MCF 10A (cell line): ENCODE measurements at regions of chr10 and their contacts with region 1.

Region 1: DNA sequence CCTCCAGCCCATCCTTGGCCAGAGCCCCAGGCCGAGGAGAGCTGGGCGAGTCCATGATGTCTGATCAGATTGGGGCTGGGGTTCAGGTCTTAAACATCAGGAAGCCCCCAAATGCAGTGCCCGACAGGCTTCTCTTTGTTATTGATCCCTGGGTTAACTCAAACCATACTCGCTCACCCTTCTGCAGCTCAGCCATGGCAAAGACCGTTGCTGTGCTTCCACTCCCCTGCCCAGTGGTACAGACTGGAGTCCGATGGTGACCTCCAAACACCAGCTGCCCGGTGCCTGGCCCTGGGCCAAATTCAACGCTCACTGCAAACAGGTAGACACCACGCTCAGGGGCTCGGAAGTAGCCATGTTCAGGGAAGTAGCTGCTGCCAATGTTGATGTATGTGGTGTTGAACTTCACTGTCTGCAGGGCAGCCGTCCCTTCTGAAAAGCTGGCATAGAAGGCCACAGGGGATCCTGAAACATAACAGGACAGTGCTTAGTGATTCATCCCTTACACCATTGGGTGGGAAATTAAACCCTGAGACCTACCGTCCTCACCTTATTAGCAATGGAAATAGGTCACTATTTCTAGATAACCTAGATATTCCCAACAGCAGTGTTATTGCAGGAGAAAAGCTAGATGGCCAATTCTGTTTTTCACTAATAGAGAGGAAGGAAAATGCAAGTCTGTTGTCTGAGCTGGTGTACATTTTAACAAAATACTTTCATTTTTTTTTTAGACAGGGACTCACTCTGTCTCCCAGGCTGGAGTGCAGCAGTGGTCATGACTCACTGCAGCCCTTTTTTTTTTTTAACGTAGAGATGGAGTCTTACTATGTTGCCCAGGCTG is 20.5 kb downstream of the MMRN2 start:
- DNase-seq: peak; percentile 25
- H3K4me3 Mint-ChIP-seq: no peak overlapping the region
- H3K27ac Mint-ChIP-seq: no peak overlapping the region
- H3K4me1 Mint-ChIP-seq: peaks cover 2% of the 10 kb centered on the region
- H3K27me3 Mint-ChIP-seq: no peaks in the 10 kb centered on the region
- CTCF ChIP-seq: no peak

Region 2: DNA sequence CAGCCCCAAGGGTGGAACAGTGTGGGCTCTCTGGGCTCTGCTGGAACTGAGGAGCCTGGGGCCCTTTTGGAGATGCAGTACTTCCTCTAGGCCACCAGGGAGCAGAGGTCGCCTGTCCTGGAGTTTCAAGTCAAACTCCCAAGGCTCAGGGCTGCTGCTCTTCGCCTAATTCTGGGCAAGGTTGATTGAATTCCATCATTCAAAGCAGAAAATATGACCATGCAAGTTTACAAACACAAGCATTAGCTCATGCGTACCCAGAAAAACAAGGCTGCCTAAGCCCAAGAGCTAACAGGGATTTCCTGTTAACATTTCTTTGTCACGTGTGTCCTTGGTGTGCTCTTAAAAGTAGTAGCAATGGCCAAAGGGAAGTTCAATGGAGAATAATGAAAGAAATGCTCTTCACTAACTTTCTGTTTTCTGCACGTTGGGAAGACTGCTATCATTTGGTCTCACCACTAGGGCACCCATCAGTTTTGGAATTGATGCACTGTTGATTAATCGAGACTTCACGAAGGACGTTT is 248.4 kb before region 1 on chr10:
- CTCF ChIA-PET with region 1: interaction called, 12 read pairs
- POLR2A ChIA-PET with region 1: no interaction called
- intact Hi-C with region 1: no loop called
- DNase-seq: peak; percentile 67
- H3K4me3 Mint-ChIP-seq: no peak overlapping the region
- H3K27ac Mint-ChIP-seq: no peak overlapping the region
- H3K4me1 Mint-ChIP-seq: no peaks in the 10 kb centered on the region
- H3K27me3 Mint-ChIP-seq: peaks cover 15% of the 10 kb centered on the region
- CTCF ChIP-seq: peak; percentile 76

Region 3: DNA sequence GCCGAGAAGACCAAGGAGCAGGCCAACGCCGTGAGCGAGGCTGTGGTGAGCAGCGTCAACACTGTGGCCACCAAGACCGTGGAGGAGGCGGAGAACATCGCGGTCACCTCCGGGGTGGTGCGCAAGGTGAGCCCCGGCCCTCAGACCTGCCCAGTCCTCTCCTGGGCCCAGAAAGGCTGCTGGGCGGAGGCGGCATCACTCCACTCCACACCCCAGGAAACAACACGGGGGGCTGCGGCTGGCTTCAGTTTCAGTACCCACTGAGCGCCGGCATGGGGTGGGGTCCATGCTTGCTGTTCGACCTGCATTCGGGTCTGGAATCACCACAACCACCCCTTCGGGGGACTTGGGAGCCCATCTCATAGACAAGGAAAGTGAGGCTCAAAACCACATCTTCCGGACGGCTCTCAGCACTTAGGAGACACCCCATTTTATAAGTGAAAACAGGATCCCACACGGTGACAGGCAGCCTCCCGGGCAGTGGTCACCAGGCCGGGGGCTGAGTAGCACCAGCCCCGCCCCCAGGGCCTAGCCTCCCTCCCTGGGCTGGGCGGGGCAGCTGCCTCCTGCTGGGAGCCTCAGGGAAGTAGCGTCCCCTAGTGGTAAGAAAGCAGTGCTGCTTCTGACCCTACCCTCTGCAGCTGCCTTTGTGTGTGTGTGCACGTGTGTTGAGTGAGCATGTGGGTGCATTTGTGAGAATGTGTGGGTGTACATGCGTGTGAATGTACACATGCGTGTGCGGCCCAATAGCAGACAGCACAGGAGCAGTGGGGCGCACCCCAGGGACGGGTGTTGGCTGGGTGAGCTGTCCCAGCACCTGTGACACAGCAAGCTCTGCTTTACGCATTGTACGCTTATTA is 23.4 kb after region 1 on chr10:
- CTCF ChIA-PET with region 1: interaction called, 66 read pairs
- POLR2A ChIA-PET with region 1: interaction called, 3 read pairs
- intact Hi-C with region 1: no loop called
- DNase-seq: peak; percentile 80
- H3K4me3 Mint-ChIP-seq: no peak overlapping the region
- H3K27ac Mint-ChIP-seq: no peak overlapping the region
- H3K4me1 Mint-ChIP-seq: peaks cover 12% of the 10 kb centered on the region
- H3K27me3 Mint-ChIP-seq: no peaks in the 10 kb centered on the region
- CTCF ChIP-seq: peak; percentile 85

Region 4: DNA sequence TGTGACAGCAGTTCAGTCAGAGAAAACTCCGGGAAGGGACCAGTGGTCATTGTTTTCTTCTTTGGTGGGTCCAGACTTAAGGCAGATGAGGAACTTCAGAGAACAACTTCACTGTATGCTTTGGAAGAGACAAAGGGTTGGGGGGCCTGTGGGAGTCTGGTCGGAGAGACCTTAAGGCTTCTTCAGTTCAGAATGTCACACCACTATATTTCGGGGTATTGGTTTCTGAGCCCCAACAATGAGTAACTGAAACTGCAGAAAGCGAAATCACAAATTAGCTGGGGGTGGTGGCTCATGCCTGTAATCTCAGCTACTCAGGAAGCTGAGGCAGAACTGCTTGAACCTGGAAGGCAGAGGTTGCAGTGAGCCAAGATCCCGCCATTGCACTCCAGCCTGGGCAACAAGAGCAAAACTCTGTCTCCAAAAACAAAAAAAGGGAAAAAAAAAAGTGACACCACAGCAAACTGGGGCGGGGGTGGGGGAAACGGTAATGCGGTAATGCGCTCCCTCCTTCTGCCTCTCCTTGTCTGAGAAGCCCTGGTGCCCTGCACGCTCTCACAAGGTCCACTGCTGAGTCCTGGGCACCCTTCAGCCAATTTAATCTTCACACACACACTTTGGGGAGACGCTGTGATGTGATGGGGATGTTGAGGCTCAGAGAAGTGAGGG is 29.2 kb after region 1 on chr10:
- CTCF ChIA-PET with region 1: interaction called, 66 read pairs
- POLR2A ChIA-PET with region 1: interaction called, 9 read pairs
- intact Hi-C with region 1: loop called (anchors 2 kb)
- DNase-seq: no peak
- H3K4me3 Mint-ChIP-seq: no peak overlapping the region
- H3K27ac Mint-ChIP-seq: no peak overlapping the region
- H3K4me1 Mint-ChIP-seq: peaks cover 36% of the 10 kb centered on the region
- H3K27me3 Mint-ChIP-seq: no peaks in the 10 kb centered on the region
- CTCF ChIP-seq: no peak

Region 5: DNA sequence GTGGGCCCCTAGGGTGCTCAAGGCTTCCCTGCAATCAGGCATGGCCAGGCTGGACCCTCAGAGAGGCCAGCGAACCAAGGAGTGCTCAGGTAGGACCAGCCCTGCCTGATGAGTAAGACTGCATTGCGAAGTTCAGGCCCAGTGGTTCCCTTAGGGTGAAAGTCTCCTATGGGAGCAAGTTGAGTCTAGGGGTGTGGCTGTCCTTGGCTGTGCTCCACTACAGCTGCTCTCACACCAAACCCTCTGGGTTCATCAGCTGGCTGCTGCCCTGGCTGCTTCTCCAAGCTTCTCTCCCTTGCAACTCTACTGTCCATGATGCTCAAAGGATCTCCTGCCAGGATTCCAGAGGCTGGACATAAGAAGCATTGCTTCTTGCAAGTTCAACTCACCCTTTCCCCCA is 101.9 kb after region 1 on chr10:
- CTCF ChIA-PET with region 1: interaction called, 19 read pairs
- POLR2A ChIA-PET with region 1: interaction called, 7 read pairs
- intact Hi-C with region 1: no loop called
- DNase-seq: peak; percentile 93
- H3K4me3 Mint-ChIP-seq: no peak overlapping the region
- H3K27ac Mint-ChIP-seq: no peak overlapping the region
- H3K4me1 Mint-ChIP-seq: peaks cover 22% of the 10 kb centered on the region
- H3K27me3 Mint-ChIP-seq: no peaks in the 10 kb centered on the region
- CTCF ChIP-seq: no peak